PC-9 (cell line): ENCODE measurements at regions of chr1 and their contacts with region 1.

Region 1: GRCh38 chr1:91559046-91559750 is 58.5 kb downstream of the CDC7 start:
- DNase-seq: no peak
- H3K4me3 ChIP-seq: no peak overlapping the region
- H3K27ac ChIP-seq: no peak overlapping the region
- H3K4me1 ChIP-seq: 0 out of 2 replicates have a peak, but pooled peaks cover 5% of the 10 kb centered on the region
- H3K27me3 ChIP-seq: no peaks in the 10 kb centered on the region
- CTCF ChIP-seq: no peak

Region 2: GRCh38 chr1:92465256-92465647 is 906.1 kb after region 1 on chr1:
- CTCF ChIA-PET with region 1: no interaction called
- POLR2A ChIA-PET with region 1: interaction called, 18 read pairs
- intact Hi-C with region 1: no loop called
- DNase-seq: no peak
- H3K4me3 ChIP-seq: no peak overlapping the region
- H3K27ac ChIP-seq: no peak overlapping the region
- H3K4me1 ChIP-seq: no peaks in the 10 kb centered on the region
- H3K27me3 ChIP-seq: no peaks in the 10 kb centered on the region
- CTCF ChIP-seq: no peak